Motor neuron (in vitro differentiated cells): ENCODE measurements at regions of chr5 and their contacts with region 1.

Region 1: DNA sequence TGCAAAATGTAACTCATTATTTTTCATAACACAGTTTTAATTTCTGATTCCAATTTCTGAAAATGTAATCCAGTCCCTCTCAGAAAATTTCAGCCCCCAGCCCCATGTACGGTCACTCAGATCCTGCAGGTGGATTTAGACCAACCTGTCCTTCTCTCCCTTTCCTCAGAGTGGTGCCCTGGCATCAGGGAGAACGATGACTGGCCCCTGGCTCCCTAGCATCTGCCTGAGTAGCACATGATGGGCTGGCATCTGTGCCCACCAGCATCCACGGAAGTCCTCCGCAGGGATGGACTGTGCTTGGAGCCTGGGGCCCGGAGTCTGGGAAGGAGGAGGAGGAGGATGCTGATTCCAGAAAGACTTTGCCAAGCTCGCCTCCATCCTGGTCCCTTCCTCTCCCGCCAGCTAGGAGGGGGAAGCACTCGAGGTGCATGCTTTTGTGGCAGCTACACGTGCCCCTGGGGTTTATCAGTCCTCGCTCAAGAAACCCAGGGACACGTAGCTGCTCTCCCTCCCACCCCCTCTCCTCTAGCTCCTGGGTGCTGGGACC is 54.4 kb upstream of the RUFY1 start:
- ATAC-seq: peak in 1 of 8 experiments; percentile 41
- H3K4me3 ChIP-seq: no peak overlapping the region
- H3K27ac ChIP-seq: no peak overlapping the region
- H3K4me1 ChIP-seq: no peaks in the 10 kb centered on the region

Region 2: GRCh38 chr5:179166886-179167841 is 328.8 kb before region 1 on chr5:
- in situ Hi-C with region 1: loop called (anchors 5 to 25 kb)
- ATAC-seq: peak; percentile 77 to 98 (median 84)
- H3K4me3 ChIP-seq: peak overlapping the region in 1 of 5 donors; percentile 5
- H3K27ac ChIP-seq: no peak overlapping the region
- H3K4me1 ChIP-seq: no peaks in the 10 kb centered on the region

Region 3: GRCh38 chr5:179195561-179196404 is 300.2 kb before region 1 on chr5:
- in situ Hi-C with region 1: no loop called
- ATAC-seq: no peak
- H3K4me3 ChIP-seq: no peak overlapping the region
- H3K27ac ChIP-seq: no peak overlapping the region
- H3K4me1 ChIP-seq: peaks cover 0 to 5% of the 10 kb centered on the region in 2 donors